ENCODE measurements at regions of chr12 and their contacts with region 1.

Region 1: GRCh38 chr12:49130151-49131050 is 794 bp downstream of the TUBA1B start:
- DNase-seq: peak; percentile 93 to 95 (median 94)
- H3K4me3 ChIP-seq: peak overlapping the region; percentile 94 to 97
- H3K4me3 Mint-ChIP-seq: peak overlapping the region; percentile 97 to 99 (median 98)
- H3K27ac ChIP-seq: peak overlapping the region; percentile 94
- H3K27ac Mint-ChIP-seq: peak overlapping the region; percentile 98 to 99 (median 99)
- H3K4me1 ChIP-seq: peaks cover 42% of the 10 kb centered on the region
- H3K4me1 Mint-ChIP-seq: peaks cover 24 to 63% (median 36%) of the 10 kb centered on the region in 4 donors
- H3K27me3 ChIP-seq: no peaks in the 10 kb centered on the region
- H3K27me3 Mint-ChIP-seq: no peaks in the 10 kb centered on the region

Region 2: GRCh38 chr12:47610686-47611252 is 1519.6 kb before region 1 on chr12:
- CTCF ChIA-PET with region 1: no interaction called
- POLR2A ChIA-PET with region 1: no interaction called
- intact Hi-C with region 1: no loop called
- DNase-seq: no peak
- H3K4me3 ChIP-seq: no peak overlapping the region
- H3K4me3 Mint-ChIP-seq: no peak overlapping the region
- H3K27ac ChIP-seq: no peak overlapping the region
- H3K27ac Mint-ChIP-seq: peak overlapping the region in 1 of 7 donors; percentile 15
- H3K4me1 ChIP-seq: no peaks in the 10 kb centered on the region
- H3K4me1 Mint-ChIP-seq: no peaks in the 10 kb centered on the region
- H3K27me3 ChIP-seq: no peaks in the 10 kb centered on the region
- H3K27me3 Mint-ChIP-seq: no peaks in the 10 kb centered on the region

Region 3: DNA sequence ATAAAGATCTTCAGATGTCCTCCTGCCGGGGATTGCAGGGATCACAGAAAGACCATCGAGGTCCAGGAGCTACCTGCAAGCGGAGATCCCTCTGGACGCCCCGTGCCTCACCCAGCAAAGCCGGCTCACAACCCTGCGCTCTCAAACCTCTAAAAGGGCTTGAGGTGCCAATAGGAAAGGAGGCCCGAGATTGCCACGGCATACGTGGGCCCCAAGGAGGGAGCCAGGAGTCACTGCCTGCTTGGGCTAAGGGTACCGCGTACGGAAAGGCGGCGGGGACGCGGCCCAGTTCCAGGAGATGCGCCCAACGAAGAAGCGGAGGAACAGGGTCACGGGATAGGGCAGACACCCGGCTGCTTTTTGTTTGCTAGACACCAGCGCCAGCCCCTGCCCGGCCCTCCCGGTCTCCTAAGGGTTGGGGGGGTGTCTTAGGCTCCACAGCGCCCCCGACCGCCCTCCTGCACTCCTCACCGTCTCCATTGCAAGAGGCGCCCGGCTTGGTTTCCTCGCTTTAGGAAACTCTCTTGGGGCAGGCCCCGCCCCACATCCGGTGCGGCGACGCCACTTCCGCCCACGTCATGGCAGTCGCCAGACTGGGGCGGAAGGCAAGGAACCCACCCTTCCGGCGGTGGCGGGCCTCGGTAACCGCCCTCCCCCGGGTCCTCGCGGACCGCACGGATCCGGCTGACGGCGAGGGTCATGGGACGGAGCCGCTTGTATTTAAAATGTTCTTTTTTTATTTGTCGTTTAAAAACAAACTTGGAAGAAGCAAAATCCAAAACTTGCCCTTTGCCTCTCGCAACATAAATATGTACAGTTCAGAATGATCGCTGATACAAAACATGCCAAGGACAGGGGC is 111.9 kb before region 1 on chr12 and contains the start of gene PRKAG1:
- CTCF ChIA-PET with region 1: no interaction called
- POLR2A ChIA-PET with region 1: interaction called, 10 read pairs
- intact Hi-C with region 1: loop called (anchors 1 kb)
- DNase-seq: peak; percentile 97 to 98 (median 98)
- H3K4me3 ChIP-seq: peak within 1 kb of the TSS; percentile 94 to 96
- H3K4me3 Mint-ChIP-seq: peak within 1 kb of the TSS; percentile 87 to 99 (median 94)
- H3K27ac ChIP-seq: peak within 1 kb of the TSS; percentile 95
- H3K27ac Mint-ChIP-seq: peak within 1 kb of the TSS; percentile 95 to 100 (median 99)
- H3K4me1 ChIP-seq: peaks cover 24% of the 10 kb centered on the region
- H3K4me1 Mint-ChIP-seq: peaks cover 18 to 51% (median 37%) of the 10 kb centered on the region in 4 donors
- H3K27me3 ChIP-seq: no peaks in the 10 kb centered on the region
- H3K27me3 Mint-ChIP-seq: no peaks in the 10 kb centered on the region
- total RNA-seq, gene PRKAG1: 48.9 to 53.7 TPM

Region 4: DNA sequence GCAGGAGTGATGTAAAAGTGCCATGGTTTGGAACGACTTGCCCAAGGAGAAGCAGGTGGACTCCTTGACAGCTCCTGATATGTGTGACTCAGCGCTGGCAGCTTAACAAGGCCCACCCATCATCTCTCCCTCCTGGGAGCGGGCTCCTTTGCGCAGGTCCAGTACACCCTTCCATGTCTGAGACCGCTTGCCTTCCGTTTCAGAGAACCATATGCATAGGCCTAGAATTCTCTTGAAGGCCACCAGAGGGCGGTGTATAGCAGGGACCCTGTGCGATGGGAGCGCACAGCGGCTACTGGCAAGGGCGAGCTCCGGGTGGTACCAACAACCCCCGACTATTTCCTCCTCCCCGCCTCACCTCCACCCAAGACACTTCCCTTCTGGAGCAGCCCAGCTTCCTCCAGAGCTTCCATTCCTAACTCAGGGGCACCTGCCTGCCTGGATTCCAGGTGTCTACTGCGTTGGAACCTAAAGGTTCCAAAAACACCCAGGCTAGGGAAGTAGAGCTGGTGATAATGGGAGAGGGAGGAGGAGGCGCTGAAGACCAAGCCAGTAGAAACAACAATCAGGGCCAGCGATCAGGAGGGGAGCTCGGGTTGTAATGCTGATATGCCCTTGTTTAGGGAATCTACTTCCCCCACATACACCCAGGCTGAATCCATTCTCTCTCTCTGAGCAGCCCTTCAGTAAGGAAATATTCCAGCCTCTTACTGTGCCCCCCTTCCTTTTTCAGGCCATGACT is 42.0 kb before region 1 on chr12:
- CTCF ChIA-PET with region 1: interaction called, 76 read pairs
- POLR2A ChIA-PET with region 1: interaction called, 47 read pairs
- intact Hi-C with region 1: loop called (anchors 1 kb)
- DNase-seq: peak; percentile 68 to 73 (median 69)
- H3K4me3 ChIP-seq: no peak overlapping the region
- H3K4me3 Mint-ChIP-seq: peak overlapping the region in 7 of 8 donors; percentile 17 to 83 (median 56)
- H3K27ac ChIP-seq: no peak overlapping the region
- H3K27ac Mint-ChIP-seq: peak overlapping the region in 4 of 7 donors; percentile 2 to 67 (median 37)
- H3K4me1 ChIP-seq: peaks cover 56% of the 10 kb centered on the region
- H3K4me1 Mint-ChIP-seq: peaks cover 23 to 66% (median 40%) of the 10 kb centered on the region in 4 donors
- H3K27me3 ChIP-seq: peaks cover 41% of the 10 kb centered on the region
- H3K27me3 Mint-ChIP-seq: peaks cover 26 to 41% of the 10 kb centered on the region in 2 donors

Region 5: GRCh38 chr12:49146406-49146805 is 16.0 kb after region 1 on chr12:
- CTCF ChIA-PET with region 1: interaction called, 7 read pairs
- POLR2A ChIA-PET with region 1: interaction called, 17 read pairs
- intact Hi-C with region 1: no loop called
- DNase-seq: no peak
- H3K4me3 ChIP-seq: no peak overlapping the region
- H3K4me3 Mint-ChIP-seq: no peak overlapping the region
- H3K27ac ChIP-seq: no peak overlapping the region
- H3K27ac Mint-ChIP-seq: no peak overlapping the region
- H3K4me1 ChIP-seq: no peaks in the 10 kb centered on the region
- H3K4me1 Mint-ChIP-seq: peaks cover 0 to 3% (median 0%) of the 10 kb centered on the region in 4 donors
- H3K27me3 ChIP-seq: no peaks in the 10 kb centered on the region
- H3K27me3 Mint-ChIP-seq: no peaks in the 10 kb centered on the region

Region 6: DNA sequence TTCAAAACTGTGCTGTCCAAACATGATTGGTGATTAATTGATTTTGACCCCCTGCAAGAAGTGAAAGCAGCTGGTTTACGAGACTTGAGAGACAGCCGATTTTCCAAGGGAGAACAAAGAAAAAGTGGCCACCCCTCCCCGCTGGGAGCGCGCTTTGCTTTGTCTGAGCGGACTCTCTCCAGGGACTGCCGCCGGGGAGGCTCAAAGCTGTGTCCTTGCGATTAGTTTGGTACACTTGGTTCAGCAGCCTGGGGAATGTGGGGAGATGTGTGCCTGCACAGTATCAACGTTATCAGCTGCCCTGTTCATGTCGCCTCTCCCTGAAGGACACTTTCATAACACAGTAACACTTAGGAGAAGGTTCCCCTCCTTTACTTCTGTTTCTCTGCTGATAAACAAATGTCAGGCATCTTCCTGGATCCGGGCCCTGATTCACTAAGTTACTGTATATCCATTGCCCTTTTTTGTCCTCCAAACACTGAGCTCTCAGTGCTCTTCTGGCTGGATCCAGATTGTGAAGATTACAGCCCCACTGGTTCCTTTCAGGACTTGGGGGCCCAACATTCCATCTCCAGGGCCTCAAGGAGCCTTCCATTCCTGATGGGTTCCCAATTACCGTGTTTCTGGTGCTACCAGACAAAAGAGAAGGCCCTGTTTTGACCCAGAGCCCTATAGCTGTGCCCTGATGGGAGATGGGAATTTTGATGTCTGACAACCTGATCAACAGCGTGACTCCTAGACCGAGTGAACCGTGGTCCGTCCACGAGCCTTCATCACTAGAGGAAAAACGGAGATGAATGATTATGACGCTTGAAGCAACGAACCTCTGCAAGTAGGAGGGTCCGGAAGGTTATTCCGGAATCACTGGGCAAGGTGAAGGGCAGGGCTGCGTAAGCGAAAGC is 102.8 kb after region 1 on chr12:
- CTCF ChIA-PET with region 1: interaction called, 19 read pairs
- POLR2A ChIA-PET with region 1: interaction called, 36 read pairs
- intact Hi-C with region 1: loop called (anchors 1 kb)
- DNase-seq: no peak
- H3K4me3 ChIP-seq: no peak overlapping the region
- H3K4me3 Mint-ChIP-seq: peak overlapping the region; percentile 21 to 61 (median 53)
- H3K27ac ChIP-seq: no peak overlapping the region
- H3K27ac Mint-ChIP-seq: peak overlapping the region in 6 of 7 donors; percentile 33 to 81 (median 54)
- H3K4me1 ChIP-seq: no peaks in the 10 kb centered on the region
- H3K4me1 Mint-ChIP-seq: peaks cover 0 to 13% (median 6%) of the 10 kb centered on the region in 4 donors
- H3K27me3 ChIP-seq: no peaks in the 10 kb centered on the region
- H3K27me3 Mint-ChIP-seq: no peaks in the 10 kb centered on the region

Measured in CD4-positive, alpha-beta memory T cell (primary cell).